Activated naive CD4-positive, alpha-beta T cell treated with anti-CD3 and anti-CD28 coated beads for 36 hours (primary cell): ENCODE measurements at regions of chr1 and their contacts with region 1.

Region 1: DNA sequence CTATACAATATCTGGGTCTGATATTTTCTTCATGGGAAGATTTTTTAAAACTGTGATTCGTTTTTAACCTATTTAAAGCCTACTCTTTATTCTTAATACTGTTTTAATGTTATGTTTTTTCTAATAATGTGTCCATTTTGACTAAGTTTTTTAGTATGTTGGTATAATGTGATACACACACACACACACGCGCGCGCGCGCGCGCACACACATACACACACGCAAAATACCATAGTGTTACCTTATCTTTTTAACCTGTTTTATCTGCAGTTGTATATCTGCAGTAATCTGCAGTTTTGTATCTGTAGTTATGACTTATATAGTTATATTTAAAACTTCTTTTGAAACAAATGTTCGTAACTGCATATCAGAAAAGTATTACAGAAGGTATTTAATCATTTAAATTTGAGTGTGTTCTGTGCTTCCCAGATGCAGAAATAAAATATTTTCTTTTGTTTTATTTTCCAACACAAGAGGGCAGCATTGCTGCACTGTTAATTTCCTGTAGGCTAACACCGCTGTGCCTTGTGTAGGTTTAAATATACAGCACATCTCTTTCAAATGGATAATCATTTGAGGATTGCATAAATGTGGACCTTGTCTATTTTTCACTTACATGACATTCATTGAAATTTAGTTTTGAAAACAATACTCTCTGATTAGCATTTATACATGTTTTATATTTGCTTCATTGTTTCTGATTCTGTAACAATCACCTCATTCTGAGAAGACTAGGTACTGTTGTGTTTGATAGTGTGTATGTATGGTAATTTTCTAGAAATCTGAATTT is 166.1 kb downstream of the PDE4B start:
- DNase-seq: peak; percentile 27
- H3K4me3 Mint-ChIP-seq: no peak overlapping the region
- H3K27ac Mint-ChIP-seq: no peak overlapping the region
- H3K4me1 Mint-ChIP-seq: no peaks in the 10 kb centered on the region
- H3K27me3 Mint-ChIP-seq: no peaks in the 10 kb centered on the region

Region 2: DNA sequence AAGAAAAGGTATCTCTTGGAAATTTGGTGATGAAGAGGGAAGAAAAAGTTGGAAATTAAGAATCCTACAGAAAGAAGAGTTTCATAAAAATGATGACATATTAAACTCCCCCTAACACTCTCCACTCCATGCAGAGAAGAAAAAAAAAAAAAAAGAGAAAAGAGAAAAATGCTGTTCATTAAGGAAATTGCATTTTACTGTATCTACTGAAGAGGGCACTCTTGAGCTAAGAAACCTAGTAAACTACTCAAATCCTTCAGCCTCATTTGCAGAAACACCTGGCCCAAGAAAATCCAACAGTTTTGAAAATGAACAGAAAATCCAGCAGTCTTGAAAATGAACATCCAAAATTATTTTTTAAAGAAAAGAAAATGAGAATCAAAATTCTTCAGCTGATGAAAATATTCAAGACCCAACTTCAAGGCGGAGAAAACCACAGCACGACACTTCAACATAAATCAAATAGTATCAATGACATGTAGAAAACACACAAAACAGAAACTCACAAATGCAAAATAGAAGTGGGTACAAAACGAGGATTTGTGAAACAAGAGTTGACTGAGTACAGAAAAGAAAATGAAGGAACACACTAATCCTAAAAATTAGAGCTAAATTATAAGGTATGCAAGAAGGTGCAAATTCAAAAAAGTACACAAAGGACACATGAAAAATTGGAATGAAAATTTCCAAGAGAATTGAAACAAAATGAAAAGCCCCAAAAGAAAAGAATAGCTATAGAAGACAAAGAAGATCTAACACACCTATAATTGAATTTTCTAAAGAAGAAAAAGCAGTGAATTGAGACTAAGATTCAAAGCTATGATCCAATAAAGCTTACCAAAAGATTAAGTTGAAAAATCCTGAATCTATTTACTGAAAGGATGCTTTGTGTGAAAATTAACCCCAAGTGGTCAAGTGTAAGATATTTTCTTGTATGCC is 722.6 kb before region 1 on chr1:
- CTCF ChIA-PET with region 1: no interaction called
- intact Hi-C with region 1: loop called (anchors 5 kb)
- DNase-seq: no peak
- H3K4me3 Mint-ChIP-seq: no peak overlapping the region
- H3K27ac Mint-ChIP-seq: no peak overlapping the region
- H3K4me1 Mint-ChIP-seq: peaks cover 7% of the 10 kb centered on the region
- H3K27me3 Mint-ChIP-seq: peaks cover 3% of the 10 kb centered on the region

Region 3: GRCh38 chr1:65717815-65718454 is 240.8 kb before region 1 on chr1:
- CTCF ChIA-PET with region 1: interaction called, 3 read pairs
- intact Hi-C with region 1: loop called (anchors 5 kb)
- DNase-seq: peak; percentile 43
- H3K4me3 Mint-ChIP-seq: no peak overlapping the region
- H3K27ac Mint-ChIP-seq: no peak overlapping the region
- H3K4me1 Mint-ChIP-seq: no peaks in the 10 kb centered on the region
- H3K27me3 Mint-ChIP-seq: peaks cover 5% of the 10 kb centered on the region

Region 4: DNA sequence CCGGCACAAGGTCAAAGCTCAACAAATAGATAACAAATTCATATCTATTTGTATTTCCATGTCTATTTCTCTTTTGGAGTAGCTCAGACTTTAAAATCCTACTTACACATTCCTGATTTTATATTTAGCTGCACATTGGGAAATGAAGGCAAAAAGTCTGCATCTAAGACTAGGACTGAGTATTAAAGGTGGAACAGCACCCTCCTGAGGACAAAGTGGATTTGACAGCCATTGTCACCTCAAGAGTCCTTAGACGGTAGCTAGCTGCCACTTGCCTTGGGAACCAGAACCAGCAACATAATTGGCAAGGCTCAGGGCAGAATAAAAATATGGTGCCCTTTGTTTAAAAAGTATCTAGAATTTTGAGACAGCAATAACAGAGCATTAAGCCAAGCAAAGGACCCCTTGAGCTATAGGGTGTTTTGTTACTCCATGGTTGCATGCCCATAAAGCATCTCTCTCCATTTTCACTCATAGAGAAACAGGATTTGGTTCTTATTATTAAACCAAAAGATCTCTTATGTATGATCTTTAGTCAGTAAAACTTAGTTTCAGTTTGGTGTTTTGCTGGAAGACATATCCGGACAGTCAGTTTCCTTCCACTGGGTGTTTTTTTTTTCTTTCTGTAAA is 545.2 kb after region 1 on chr1:
- CTCF ChIA-PET with region 1: interaction called, 5 read pairs
- intact Hi-C with region 1: loop called (anchors 1 kb)
- DNase-seq: peak; percentile 74
- H3K4me3 Mint-ChIP-seq: no peak overlapping the region
- H3K27ac Mint-ChIP-seq: no peak overlapping the region
- H3K4me1 Mint-ChIP-seq: no peaks in the 10 kb centered on the region
- H3K27me3 Mint-ChIP-seq: peaks cover 15% of the 10 kb centered on the region